Mammary epithelial cell (primary cell): ENCODE measurements at regions of chr10 and their contacts with region 1.

Region 1: GRCh38 chr10:87531908-87532622 is 27.4 kb downstream of the MINPP1 start:
- DNase-seq: no peak
- H3K4me3 ChIP-seq: no peak overlapping the region
- H3K27ac ChIP-seq: no peak overlapping the region
- H3K4me1 ChIP-seq: no peaks in the 10 kb centered on the region
- H3K27me3 ChIP-seq: no peaks in the 10 kb centered on the region
- CTCF ChIP-seq: no peak

Region 2: DNA sequence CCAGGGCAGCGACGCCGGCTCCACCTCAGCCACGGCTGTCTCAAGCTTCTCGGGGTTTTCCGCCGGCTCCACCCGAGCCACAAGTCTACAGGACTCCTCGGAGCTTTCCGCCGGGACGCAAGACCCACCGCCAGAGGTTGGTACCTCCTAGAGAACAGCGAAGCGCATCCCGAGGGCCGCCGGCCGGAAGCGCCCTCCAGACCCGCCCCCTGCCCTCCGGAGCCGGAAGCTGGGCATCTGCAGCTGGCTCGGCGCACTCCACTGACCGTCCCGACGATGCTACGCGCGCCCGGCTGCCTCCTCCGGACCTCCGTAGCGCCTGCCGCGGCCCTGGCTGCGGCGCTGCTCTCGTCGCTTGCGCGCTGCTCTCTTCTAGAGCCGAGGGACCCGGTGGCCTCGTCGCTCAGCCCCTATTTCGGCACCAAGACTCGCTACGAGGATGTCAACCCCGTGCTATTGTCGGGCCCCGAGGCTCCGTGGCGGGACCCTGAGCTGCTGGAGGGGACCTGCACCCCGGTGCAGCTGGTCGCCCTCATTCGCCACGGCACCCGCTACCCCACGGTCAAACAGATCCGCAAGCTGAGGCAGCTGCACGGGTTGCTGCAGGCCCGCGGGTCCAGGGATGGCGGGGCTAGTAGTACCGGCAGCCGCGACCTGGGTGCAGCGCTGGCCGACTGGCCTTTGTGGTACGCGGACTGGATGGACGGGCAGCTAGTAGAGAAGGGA is 27.3 kb before region 1 on chr10 and contains the start of gene MINPP1:
- CTCF ChIA-PET with region 1: interaction called, 25 read pairs
- dilution Hi-C with region 1: no loop called
- in situ Hi-C with region 1: no loop called
- intact Hi-C with region 1: no loop called
- DNase-seq: peak; percentile 89
- H3K4me3 ChIP-seq: peak within 1 kb of the TSS; percentile 68 to 98 (median 71)
- H3K27ac ChIP-seq: peak within 1 kb of the TSS; percentile 74
- H3K4me1 ChIP-seq: peaks cover 18% of the 10 kb centered on the region
- H3K27me3 ChIP-seq: no peaks in the 10 kb centered on the region
- CTCF ChIP-seq: no peak
- total RNA-seq, gene MINPP1: 17.9 to 32.8 TPM

Region 3: GRCh38 chr10:87646939-87647338 is 114.9 kb after region 1 on chr10:
- CTCF ChIA-PET with region 1: no interaction called
- dilution Hi-C with region 1: no loop called
- in situ Hi-C with region 1: no loop called
- intact Hi-C with region 1: no loop called
- DNase-seq: no peak
- H3K4me3 ChIP-seq: no peak overlapping the region
- H3K27ac ChIP-seq: no peak overlapping the region
- H3K4me1 ChIP-seq: peaks cover 5% of the 10 kb centered on the region
- H3K27me3 ChIP-seq: no peaks in the 10 kb centered on the region
- CTCF ChIP-seq: no peak

Region 4: GRCh38 chr10:87659571-87660483 is 127.8 kb after region 1 on chr10 and contains the start of gene PAPSS2:
- CTCF ChIA-PET with region 1: no interaction called
- dilution Hi-C with region 1: no loop called
- in situ Hi-C with region 1: no loop called
- intact Hi-C with region 1: loop called (anchors 1 kb)
- DNase-seq: peak; percentile 46
- H3K4me3 ChIP-seq: peak within 1 kb of the TSS; percentile 35 to 79 (median 68)
- H3K27ac ChIP-seq: no peak within 1 kb of the TSS
- H3K4me1 ChIP-seq: peaks cover 3% of the 10 kb centered on the region
- H3K27me3 ChIP-seq: no peaks in the 10 kb centered on the region
- CTCF ChIP-seq: no peak
- total RNA-seq, gene PAPSS2: 3.8 to 9.1 TPM

Region 5: GRCh38 chr10:87734987-87735827 is 203.1 kb after region 1 on chr10:
- CTCF ChIA-PET with region 1: no interaction called
- dilution Hi-C with region 1: no loop called
- in situ Hi-C with region 1: loop called (anchors 25 kb)
- intact Hi-C with region 1: loop called (anchors 1 kb)
- DNase-seq: peak; percentile 18
- H3K4me3 ChIP-seq: no peak overlapping the region
- H3K27ac ChIP-seq: no peak overlapping the region
- H3K4me1 ChIP-seq: peaks cover 3% of the 10 kb centered on the region
- H3K27me3 ChIP-seq: no peaks in the 10 kb centered on the region
- CTCF ChIP-seq: peak; percentile 77 to 81

Region 6: GRCh38 chr10:87771871-87772500 is 239.9 kb after region 1 on chr10:
- CTCF ChIA-PET with region 1: no interaction called
- dilution Hi-C with region 1: no loop called
- in situ Hi-C with region 1: no loop called
- intact Hi-C with region 1: loop called (anchors 1 kb)
- DNase-seq: peak; percentile 15
- H3K4me3 ChIP-seq: no peak overlapping the region
- H3K27ac ChIP-seq: no peak overlapping the region
- H3K4me1 ChIP-seq: peaks cover 5% of the 10 kb centered on the region
- H3K27me3 ChIP-seq: no peaks in the 10 kb centered on the region
- CTCF ChIP-seq: peak; percentile 43 to 54